ENCODE measurements at regions of chr14 and their contacts with region 1.

Region 1: GRCh38 chr14:50055461-50056228 is 60.7 kb downstream of the VCPKMT start:
- DNase-seq: peak in 1 of 42 donors; percentile 41

Region 2: GRCh38 chr14:49920935-49921334 is 134.7 kb before region 1 on chr14:
- intact Hi-C with region 1: no loop called
- DNase-seq: no peak

Region 3: GRCh38 chr14:49959822-49960408 is 95.7 kb before region 1 on chr14:
- intact Hi-C with region 1: loop called (anchors 10 kb)
- DNase-seq: peak in 3 of 42 donors; percentile 22 to 23 (median 22)

Region 4: DNA sequence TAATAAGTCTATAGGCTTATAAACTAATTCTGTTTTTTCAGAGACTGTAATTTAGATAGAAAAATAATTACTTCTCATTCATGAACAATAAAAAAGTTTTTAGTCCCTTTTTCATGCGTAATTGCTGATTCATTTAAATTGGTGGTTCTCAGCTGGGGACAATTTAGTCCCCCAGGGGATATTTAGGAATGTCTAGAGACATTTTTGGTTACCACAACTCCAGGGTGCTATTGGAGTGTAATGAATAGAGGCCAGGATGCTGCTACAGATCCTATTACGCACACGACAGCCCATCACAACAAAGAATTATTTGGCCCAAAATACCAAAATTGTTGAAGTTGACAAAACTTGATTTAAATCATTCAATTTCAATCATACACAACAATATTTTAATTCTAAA is 83.5 kb after region 1 on chr14:
- intact Hi-C with region 1: no loop called
- DNase-seq: no peak